Breast epithelium (tissue), 4 donors: ENCODE measurements at regions of chr3 and their contacts with region 1.

Region 1: GRCh38 chr3:116930786-116931185 is 221.2 kb downstream of the TUSC7 start:
- DNase-seq: no peak
- H3K4me3 ChIP-seq: no peak overlapping the region
- H3K27ac ChIP-seq: no peak overlapping the region
- H3K4me1 ChIP-seq: no peaks in the 10 kb centered on the region
- H3K27me3 ChIP-seq: no peaks in the 10 kb centered on the region
- CTCF ChIP-seq: no peak
- POLR2A ChIP-seq: no peak

Region 2: DNA sequence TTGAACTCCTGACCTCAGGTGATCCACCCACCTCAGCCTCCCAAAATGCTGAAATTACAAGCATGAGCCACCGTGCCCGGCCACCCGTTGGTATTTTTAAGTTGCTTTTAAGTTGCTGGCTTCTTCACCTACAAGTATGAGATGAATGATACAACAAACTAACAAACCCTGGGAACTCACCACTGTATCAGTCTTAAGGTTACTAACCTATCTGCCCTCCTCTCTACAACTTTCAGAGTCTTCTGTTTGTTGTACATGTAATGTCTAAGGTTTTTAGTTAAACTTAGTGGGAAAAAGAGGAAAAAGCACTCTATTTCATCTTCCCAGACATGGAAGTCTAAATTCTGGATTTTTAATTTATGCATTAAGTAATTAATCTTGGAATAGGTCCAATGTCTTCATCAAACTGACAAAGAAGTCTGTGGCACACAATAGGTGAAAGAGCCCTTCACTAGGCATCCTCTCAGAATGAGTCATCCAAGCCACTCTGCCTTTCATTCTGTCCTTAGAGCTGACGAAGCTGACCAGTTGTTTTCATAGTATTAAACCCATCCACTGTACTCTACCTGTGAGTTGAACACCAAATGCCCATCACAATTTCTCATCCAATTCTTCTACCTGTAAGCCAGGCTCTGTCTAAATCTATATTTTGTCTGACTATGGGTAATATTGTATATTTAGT is 714.9 kb after region 1 on chr3:
- intact Hi-C with region 1: no loop called
- DNase-seq: no peak
- H3K4me3 ChIP-seq: no peak overlapping the region
- H3K27ac ChIP-seq: no peak overlapping the region
- H3K4me1 ChIP-seq: no peaks in the 10 kb centered on the region
- H3K27me3 ChIP-seq: no peaks in the 10 kb centered on the region
- CTCF ChIP-seq: no peak
- POLR2A ChIP-seq: no peak

Region 3: DNA sequence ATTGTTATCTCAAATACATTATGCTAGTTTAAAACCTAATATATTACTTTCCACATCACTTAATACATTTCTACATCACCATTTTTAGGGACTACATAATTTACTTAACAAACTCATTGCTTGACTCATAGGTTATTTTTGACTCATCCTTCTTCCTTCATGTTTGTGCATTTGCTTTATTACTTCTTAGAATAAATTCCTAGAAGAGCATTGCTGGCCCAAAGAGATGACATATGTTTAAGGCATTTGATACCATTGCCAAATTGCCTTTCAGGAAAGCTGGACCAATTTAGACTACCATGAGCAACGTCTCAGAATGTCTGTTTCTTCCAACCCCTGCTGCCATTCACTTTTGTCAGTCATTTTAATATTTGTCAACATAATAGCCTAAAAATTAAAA is 1198.1 kb after region 1 on chr3:
- intact Hi-C with region 1: loop called (anchors 5 kb)
- DNase-seq: no peak
- H3K4me3 ChIP-seq: no peak overlapping the region
- H3K27ac ChIP-seq: no peak overlapping the region
- H3K4me1 ChIP-seq: no peaks in the 10 kb centered on the region
- H3K27me3 ChIP-seq: no peaks in the 10 kb centered on the region
- CTCF ChIP-seq: no peak
- POLR2A ChIP-seq: no peak